Ovary (tissue), 10 donors: ENCODE measurements at regions of chr15 and their contacts with region 1.

Region 1: DNA sequence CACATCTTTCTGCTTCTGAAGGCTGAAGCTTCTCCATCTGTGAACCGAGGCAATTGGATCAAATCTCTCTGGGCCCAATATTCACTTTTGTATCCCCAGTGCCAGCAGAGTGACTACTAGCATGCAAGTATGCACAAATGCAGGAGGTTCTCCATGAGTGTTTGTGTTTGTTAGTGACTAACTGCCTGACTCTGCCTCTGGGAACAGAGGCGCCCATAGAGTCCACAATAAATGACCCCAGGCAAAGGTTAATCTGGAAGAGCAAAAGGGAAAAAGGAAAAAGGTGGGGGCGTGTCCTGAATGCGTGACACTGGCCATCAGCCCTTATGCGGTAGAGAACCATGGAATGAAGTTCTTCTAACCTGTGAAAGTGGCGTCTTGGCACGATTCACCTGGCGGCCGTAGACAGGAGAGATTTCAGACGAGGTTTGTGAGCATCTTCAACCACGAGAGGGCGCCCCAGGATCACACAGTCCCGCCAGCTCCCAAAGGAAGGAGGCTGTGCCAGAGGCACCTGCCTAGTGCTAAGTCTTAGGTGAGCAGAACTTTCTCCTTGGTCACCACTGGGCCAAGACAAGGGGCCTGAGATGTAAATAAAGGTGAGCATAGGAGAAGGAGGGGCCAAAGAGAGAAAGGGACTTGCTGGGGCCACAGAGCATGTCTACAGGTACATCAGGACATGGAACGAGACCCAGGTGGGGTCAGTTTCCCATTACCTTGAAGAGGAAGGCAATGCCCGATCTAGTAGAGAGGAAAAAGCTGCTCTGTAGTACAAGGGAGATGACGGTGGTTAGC is 44.2 kb downstream of the RBPMS2 start:
- DNase-seq: peak; percentile 82 to 92 (median 91)
- H3K4me3 ChIP-seq: no peak overlapping the region
- H3K27ac ChIP-seq: no peak overlapping the region
- H3K4me1 ChIP-seq: no peaks in the 10 kb centered on the region
- H3K27me3 ChIP-seq: no peaks in the 10 kb centered on the region
- CTCF ChIP-seq: peak; percentile 90 to 94 (median 91)
- EP300 ChIP-seq: no peak
- POLR2A ChIP-seq: no peak

Region 2: DNA sequence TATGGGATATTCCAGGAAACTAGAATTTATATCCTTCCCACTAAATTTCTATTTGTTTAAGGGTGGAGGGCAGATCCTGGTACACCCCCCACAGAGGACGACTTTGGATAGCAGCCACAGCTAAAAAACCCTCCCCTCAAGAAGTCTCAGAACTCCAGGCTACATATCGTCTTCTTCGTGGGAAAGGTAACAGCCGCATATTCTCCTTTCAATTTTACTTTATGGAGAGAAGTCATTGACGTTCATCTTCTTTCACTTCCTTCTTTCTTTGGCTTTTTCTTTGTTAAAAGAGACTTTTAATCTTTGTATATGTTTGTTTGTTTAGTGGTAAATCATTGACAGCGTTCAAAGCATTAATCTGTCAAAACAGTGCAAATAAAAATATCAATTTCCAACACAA is 307.2 kb before region 1 on chr15:
- intact Hi-C with region 1: loop called in 1 of 4 experiments (anchors 5 kb)
- DNase-seq: no peak
- H3K4me3 ChIP-seq: no peak overlapping the region
- H3K27ac ChIP-seq: no peak overlapping the region
- H3K4me1 ChIP-seq: peaks cover 1% of the 10 kb centered on the region
- H3K27me3 ChIP-seq: peaks cover under 1% of the 10 kb centered on the region
- CTCF ChIP-seq: no peak
- EP300 ChIP-seq: no peak
- POLR2A ChIP-seq: no peak

Region 3: GRCh38 chr15:64490598-64491259 is 240.5 kb before region 1 on chr15:
- intact Hi-C with region 1: no loop called
- DNase-seq: no peak
- H3K4me3 ChIP-seq: no peak overlapping the region
- H3K27ac ChIP-seq: no peak overlapping the region
- H3K4me1 ChIP-seq: peaks cover 3% of the 10 kb centered on the region
- H3K27me3 ChIP-seq: no peaks in the 10 kb centered on the region
- CTCF ChIP-seq: no peak
- EP300 ChIP-seq: no peak
- POLR2A ChIP-seq: no peak

Region 4: DNA sequence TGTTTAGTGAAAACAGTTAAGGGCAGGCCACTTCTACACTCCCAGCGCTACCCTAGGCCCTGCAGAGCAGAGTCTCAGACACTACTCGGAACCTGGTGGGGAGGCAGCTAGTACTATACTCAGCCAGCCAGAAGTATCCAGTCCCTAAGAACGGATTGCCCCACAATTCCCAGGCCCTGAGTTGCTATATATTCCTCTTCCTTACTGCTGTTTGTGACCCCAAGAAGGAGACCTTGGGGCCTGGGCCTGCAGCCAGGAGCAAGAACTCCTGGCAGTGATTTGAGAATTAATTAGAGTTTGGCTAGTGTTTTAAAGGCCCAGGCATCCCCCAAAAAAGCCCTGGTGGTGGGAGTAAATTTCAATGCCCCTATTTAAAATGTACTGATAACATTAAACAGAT is 43.5 kb before region 1 on chr15:
- intact Hi-C with region 1: loop called (anchors 2 kb)
- DNase-seq: peak; percentile 33 to 71 (median 50)
- H3K4me3 ChIP-seq: no peak overlapping the region
- H3K27ac ChIP-seq: peak overlapping the region in 1 of 2 donors; percentile 46
- H3K4me1 ChIP-seq: peaks cover 34% of the 10 kb centered on the region
- H3K27me3 ChIP-seq: no peaks in the 10 kb centered on the region
- CTCF ChIP-seq: no peak
- EP300 ChIP-seq: no peak
- POLR2A ChIP-seq: no peak

Region 5: GRCh38 chr15:64893481-64894394 is 162.5 kb after region 1 on chr15:
- intact Hi-C with region 1: loop called in 1 of 4 experiments (anchors 10 kb)
- DNase-seq: peak; percentile 89 to 94 (median 91)
- H3K4me3 ChIP-seq: peak overlapping the region; percentile 19
- H3K27ac ChIP-seq: peak overlapping the region in 1 of 2 donors; percentile 36
- H3K4me1 ChIP-seq: peaks cover 20% of the 10 kb centered on the region
- H3K27me3 ChIP-seq: no peaks in the 10 kb centered on the region
- CTCF ChIP-seq: no peak
- EP300 ChIP-seq: no peak
- POLR2A ChIP-seq: peak; percentile 38